ENCODE measurements at regions of chr10 and their contacts with region 1.

Region 1: GRCh38 chr10:91298224-91298871 is 77.9 kb downstream of the PCGF5 start:
- DNase-seq: peak; percentile 64 to 90 (median 72)
- ATAC-seq: peak; percentile 99
- H3K4me3 ChIP-seq: peak overlapping the region; percentile 54
- H3K4me3 Mint-ChIP-seq: peak overlapping the region; percentile 75
- H3K27ac ChIP-seq: no peak overlapping the region
- H3K27ac Mint-ChIP-seq: no peak overlapping the region
- H3K4me1 ChIP-seq: peaks cover 11% of the 10 kb centered on the region
- H3K4me1 Mint-ChIP-seq: peaks cover 10% of the 10 kb centered on the region
- H3K27me3 ChIP-seq: no peaks in the 10 kb centered on the region
- H3K27me3 Mint-ChIP-seq: peaks cover 7% of the 10 kb centered on the region
- CTCF ChIP-seq: peak; percentile 88

Region 2: DNA sequence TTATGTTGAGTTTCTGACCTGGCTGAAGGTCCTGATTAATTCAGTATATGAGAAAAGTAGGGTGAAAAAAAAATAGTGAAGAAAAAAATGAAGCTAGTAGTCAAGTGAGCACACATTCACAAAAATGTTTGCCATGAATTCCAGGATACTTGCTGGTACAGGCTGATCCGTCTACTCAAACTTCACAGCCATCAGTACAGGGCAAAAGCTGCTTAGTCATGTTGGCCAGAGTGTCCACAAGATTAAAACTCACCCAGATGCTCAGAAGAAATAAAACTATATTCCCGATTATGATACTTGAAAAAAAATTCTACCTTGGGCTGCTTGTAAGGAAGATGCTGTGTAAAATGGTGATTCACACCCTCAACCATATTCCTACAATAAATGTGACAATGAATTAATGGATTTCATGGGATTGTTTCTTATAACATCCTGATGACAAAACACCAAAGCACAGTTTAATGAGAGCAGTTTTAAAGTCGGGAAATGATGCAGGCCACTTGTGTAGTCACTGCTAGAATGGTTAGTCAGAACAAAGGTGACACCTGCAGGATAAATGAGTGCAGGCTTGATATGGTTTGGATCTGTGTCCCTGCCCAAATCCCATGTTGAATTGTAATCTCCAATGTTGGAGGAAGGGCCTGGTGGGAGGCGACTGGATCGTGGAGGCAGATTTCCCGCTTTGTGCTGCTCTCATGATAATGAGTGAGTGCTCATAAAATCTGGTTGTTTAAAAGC is 328.2 kb before region 1 on chr10:
- CTCF ChIA-PET with region 1: no interaction called
- POLR2A ChIA-PET with region 1: no interaction called
- intact Hi-C with region 1: no loop called
- DNase-seq: no peak
- ATAC-seq: no peak
- H3K4me3 ChIP-seq: no peak overlapping the region
- H3K4me3 Mint-ChIP-seq: no peak overlapping the region
- H3K27ac ChIP-seq: no peak overlapping the region
- H3K27ac Mint-ChIP-seq: no peak overlapping the region
- H3K4me1 ChIP-seq: no peaks in the 10 kb centered on the region
- H3K4me1 Mint-ChIP-seq: no peaks in the 10 kb centered on the region
- H3K27me3 ChIP-seq: no peaks in the 10 kb centered on the region
- H3K27me3 Mint-ChIP-seq: peaks cover 5% of the 10 kb centered on the region
- CTCF ChIP-seq: no peak

Region 3: GRCh38 chr10:91251430-91252056 is 46.8 kb before region 1 on chr10:
- CTCF ChIA-PET with region 1: no interaction called
- POLR2A ChIA-PET with region 1: no interaction called
- intact Hi-C with region 1: no loop called
- DNase-seq: peak; percentile 26 to 82 (median 36)
- ATAC-seq: peak; percentile 90
- H3K4me3 ChIP-seq: no peak overlapping the region
- H3K4me3 Mint-ChIP-seq: no peak overlapping the region
- H3K27ac ChIP-seq: no peak overlapping the region
- H3K27ac Mint-ChIP-seq: no peak overlapping the region
- H3K4me1 ChIP-seq: peaks cover 6% of the 10 kb centered on the region
- H3K4me1 Mint-ChIP-seq: no peaks in the 10 kb centered on the region
- H3K27me3 ChIP-seq: no peaks in the 10 kb centered on the region
- H3K27me3 Mint-ChIP-seq: no peaks in the 10 kb centered on the region
- CTCF ChIP-seq: peak; percentile 99

Region 4: GRCh38 chr10:91389636-91390512 is 91.5 kb after region 1 on chr10:
- CTCF ChIA-PET with region 1: interaction called, 3 read pairs
- POLR2A ChIA-PET with region 1: no interaction called
- intact Hi-C with region 1: loop called in 1 of 2 experiments (anchors 5 kb)
- DNase-seq: peak in 4 of 14 experiments; percentile 31 to 85 (median 80)
- ATAC-seq: peak; percentile 99
- H3K4me3 ChIP-seq: no peak overlapping the region
- H3K4me3 Mint-ChIP-seq: no peak overlapping the region
- H3K27ac ChIP-seq: no peak overlapping the region
- H3K27ac Mint-ChIP-seq: no peak overlapping the region
- H3K4me1 ChIP-seq: no peaks in the 10 kb centered on the region
- H3K4me1 Mint-ChIP-seq: peaks cover 9% of the 10 kb centered on the region
- H3K27me3 ChIP-seq: peaks cover 0 to 10% of the 10 kb centered on the region in 2 experiments
- H3K27me3 Mint-ChIP-seq: peaks cover 28% of the 10 kb centered on the region
- CTCF ChIP-seq: peak; percentile 78

Region 5: GRCh38 chr10:91409869-91410637 is 111.7 kb after region 1 on chr10 and contains the start of gene HECTD2:
- CTCF ChIA-PET with region 1: interaction called, 3 read pairs
- POLR2A ChIA-PET with region 1: interaction called, 8 read pairs
- intact Hi-C with region 1: loop called (anchors 1 to 5 kb)
- DNase-seq: peak; percentile 61 to 94 (median 82)
- ATAC-seq: peak; percentile 85
- H3K4me3 ChIP-seq: peak within 1 kb of the TSS; percentile 92
- H3K4me3 Mint-ChIP-seq: peak within 1 kb of the TSS; percentile 92
- H3K27ac ChIP-seq: peak within 1 kb of the TSS; percentile 82 to 86
- H3K27ac Mint-ChIP-seq: peak within 1 kb of the TSS; percentile 86
- H3K4me1 ChIP-seq: peaks cover 14% of the 10 kb centered on the region
- H3K4me1 Mint-ChIP-seq: peaks cover 11% of the 10 kb centered on the region
- H3K27me3 ChIP-seq: peaks cover 3 to 8% of the 10 kb centered on the region in 2 experiments
- H3K27me3 Mint-ChIP-seq: no peaks in the 10 kb centered on the region
- CTCF ChIP-seq: peak; percentile 19
- total RNA-seq, gene HECTD2: 0.92 to 1.0 TPM

Region 6: GRCh38 chr10:91632671-91633550 is 334.6 kb after region 1 on chr10 and contains the start of gene PPP1R3C:
- CTCF ChIA-PET with region 1: interaction called, 15 read pairs
- POLR2A ChIA-PET with region 1: interaction called, 11 read pairs
- intact Hi-C with region 1: loop called in 1 of 2 experiments (anchors 1 kb)
- DNase-seq: peak in 12 of 14 experiments; percentile 0 to 56 (median 16)
- ATAC-seq: peak; percentile 46
- H3K4me3 ChIP-seq: peak within 1 kb of the TSS; percentile 33
- H3K4me3 Mint-ChIP-seq: peak within 1 kb of the TSS; percentile 49
- H3K27ac ChIP-seq: no peak within 1 kb of the TSS
- H3K27ac Mint-ChIP-seq: no peak within 1 kb of the TSS
- H3K4me1 ChIP-seq: peaks cover 12% of the 10 kb centered on the region
- H3K4me1 Mint-ChIP-seq: peaks cover 4% of the 10 kb centered on the region
- H3K27me3 ChIP-seq: peaks cover 31 to 48% of the 10 kb centered on the region in 2 experiments
- H3K27me3 Mint-ChIP-seq: peaks cover 78% of the 10 kb centered on the region
- CTCF ChIP-seq: no peak
- total RNA-seq, gene PPP1R3C: not detected

Region 7: DNA sequence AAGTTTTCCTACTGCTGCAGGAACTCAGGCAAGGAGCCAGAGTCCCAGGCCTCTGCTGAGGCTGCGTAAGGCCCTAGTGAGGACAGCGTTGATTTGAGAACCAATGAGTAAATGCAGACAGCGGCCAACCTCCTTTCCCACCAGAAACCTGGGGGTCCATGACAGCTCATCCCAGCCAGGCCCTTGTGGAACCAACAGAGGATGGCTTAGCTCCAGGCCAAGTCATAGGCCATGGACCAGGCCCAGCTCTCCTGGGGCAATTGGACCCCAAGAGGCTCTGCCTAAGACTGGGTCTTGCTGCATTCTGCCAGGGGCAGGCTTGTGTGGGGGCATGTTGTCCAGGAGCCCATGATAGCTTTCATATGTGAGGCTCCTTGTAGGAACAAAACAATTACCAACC is 399.9 kb after region 1 on chr10:
- CTCF ChIA-PET with region 1: no interaction called
- POLR2A ChIA-PET with region 1: no interaction called
- intact Hi-C with region 1: loop called in 1 of 2 experiments (anchors 5 kb)
- DNase-seq: no peak
- ATAC-seq: no peak
- H3K4me3 ChIP-seq: no peak overlapping the region
- H3K4me3 Mint-ChIP-seq: no peak overlapping the region
- H3K27ac ChIP-seq: no peak overlapping the region
- H3K27ac Mint-ChIP-seq: no peak overlapping the region
- H3K4me1 ChIP-seq: no peaks in the 10 kb centered on the region
- H3K4me1 Mint-ChIP-seq: no peaks in the 10 kb centered on the region
- H3K27me3 ChIP-seq: no peaks in the 10 kb centered on the region
- H3K27me3 Mint-ChIP-seq: peaks cover 21% of the 10 kb centered on the region
- CTCF ChIP-seq: no peak

Region 8: GRCh38 chr10:91758303-91759146 is 460.2 kb after region 1 on chr10:
- CTCF ChIA-PET with region 1: no interaction called
- POLR2A ChIA-PET with region 1: interaction called, 3 read pairs
- intact Hi-C with region 1: loop called in 1 of 2 experiments (anchors 5 kb)
- DNase-seq: peak in 3 of 14 experiments; percentile 70 to 77 (median 73)
- ATAC-seq: peak; percentile 76
- H3K4me3 ChIP-seq: no peak overlapping the region
- H3K4me3 Mint-ChIP-seq: no peak overlapping the region
- H3K27ac ChIP-seq: no peak overlapping the region
- H3K27ac Mint-ChIP-seq: no peak overlapping the region
- H3K4me1 ChIP-seq: no peaks in the 10 kb centered on the region
- H3K4me1 Mint-ChIP-seq: no peaks in the 10 kb centered on the region
- H3K27me3 ChIP-seq: peaks cover 0 to 10% of the 10 kb centered on the region in 2 experiments
- H3K27me3 Mint-ChIP-seq: peaks cover 23% of the 10 kb centered on the region
- CTCF ChIP-seq: peak; percentile 77

Region 9: DNA sequence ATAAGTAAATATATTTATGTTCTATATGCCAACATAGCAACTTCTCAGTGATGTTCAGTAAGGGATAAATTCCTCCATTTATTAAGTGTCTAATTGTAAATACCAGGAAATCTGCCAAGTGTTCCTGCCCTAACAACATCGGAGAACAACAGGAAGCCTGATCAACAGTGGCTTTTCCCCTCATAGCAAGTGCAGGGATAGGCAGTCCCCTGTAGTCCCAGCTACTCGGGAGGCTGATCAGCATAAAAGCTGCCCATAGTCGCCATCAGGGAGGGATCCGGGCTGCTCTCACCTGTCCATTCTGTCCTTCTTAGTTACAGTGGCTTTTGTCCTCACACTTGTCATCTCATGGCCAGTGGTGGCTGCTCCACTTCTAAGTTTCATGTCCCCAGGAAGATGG is 1134.2 kb after region 1 on chr10:
- CTCF ChIA-PET with region 1: no interaction called
- POLR2A ChIA-PET with region 1: no interaction called
- intact Hi-C with region 1: loop called in 1 of 2 experiments (anchors 10 kb)
- DNase-seq: no peak
- ATAC-seq: no peak
- H3K4me3 ChIP-seq: no peak overlapping the region
- H3K4me3 Mint-ChIP-seq: no peak overlapping the region
- H3K27ac ChIP-seq: no peak overlapping the region
- H3K27ac Mint-ChIP-seq: no peak overlapping the region
- H3K4me1 ChIP-seq: no peaks in the 10 kb centered on the region
- H3K4me1 Mint-ChIP-seq: no peaks in the 10 kb centered on the region
- H3K27me3 ChIP-seq: no peaks in the 10 kb centered on the region
- H3K27me3 Mint-ChIP-seq: no peaks in the 10 kb centered on the region
- CTCF ChIP-seq: no peak

Measured in CD4-positive, alpha-beta T cell (primary cell).